ENCODE measurements at regions of chr9 and their contacts with region 1.

Region 1: DNA sequence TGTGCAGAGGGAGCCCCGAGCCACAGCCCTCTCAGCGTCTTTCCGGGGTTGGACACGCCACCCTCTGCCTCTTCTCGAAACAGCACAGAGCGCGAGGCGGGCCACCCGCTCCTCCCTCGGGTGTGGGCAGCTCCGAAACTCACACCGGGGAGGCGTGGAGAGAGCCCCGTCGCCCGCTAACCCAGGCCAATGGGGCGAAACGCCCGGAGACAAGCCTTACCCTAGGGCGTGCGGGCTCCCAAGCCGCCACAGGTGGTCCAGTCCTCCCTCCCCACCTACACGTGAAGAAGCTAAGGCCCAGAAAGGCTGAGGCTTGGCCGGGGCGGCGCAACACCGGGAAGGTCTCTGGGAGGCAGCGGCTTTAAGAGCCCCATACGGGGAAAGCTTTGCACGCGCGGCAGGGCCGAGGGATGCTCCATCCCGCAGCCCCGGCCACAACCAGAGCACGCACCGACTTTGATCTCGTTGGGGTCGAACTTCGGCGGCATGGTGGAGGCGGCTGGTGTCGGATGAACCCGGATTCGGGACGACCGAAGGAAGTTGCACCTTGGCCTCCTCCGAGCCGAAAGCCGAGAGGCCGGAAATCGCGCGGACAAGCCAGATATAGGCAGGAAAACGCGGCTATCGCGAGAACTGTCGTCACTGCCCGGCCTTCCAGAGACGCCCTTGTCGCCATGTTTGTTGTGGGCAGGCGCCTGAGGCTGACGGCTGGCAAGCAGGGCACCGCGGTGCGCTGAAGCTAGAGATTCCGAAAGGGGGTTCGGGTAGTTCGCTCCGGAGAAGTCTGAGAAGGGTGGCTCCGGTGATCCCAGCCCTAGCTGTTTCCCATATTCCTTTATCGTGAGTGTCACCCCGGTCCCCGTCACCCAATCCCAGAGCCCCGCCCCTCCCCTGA is at the starts of genes LRSAM1 and RPL12:
- DNase-seq: peak; percentile 95 to 100 (median 98)
- ATAC-seq: peak; percentile 85
- H3K4me3 ChIP-seq: peak within 1 kb of the TSS; percentile 75
- H3K4me3 Mint-ChIP-seq: peak within 1 kb of the TSS; percentile 83 to 98 (median 94)
- H3K27ac ChIP-seq: peak within 1 kb of the TSS; percentile 86
- H3K27ac Mint-ChIP-seq: peak within 1 kb of the TSS; percentile 76 to 97 (median 94)
- H3K4me1 ChIP-seq: peaks cover 21 to 25% of the 10 kb centered on the region in 2 donors
- H3K4me1 Mint-ChIP-seq: peaks cover 21 to 45% (median 40%) of the 10 kb centered on the region in 7 donors
- H3K27me3 ChIP-seq: no peaks in the 10 kb centered on the region
- H3K27me3 Mint-ChIP-seq: no peaks in the 10 kb centered on the region
- total RNA-seq, gene LRSAM1: 15.1 to 23.3 (median 19.8) TPM
- total RNA-seq, gene RPL12: 1,005 to 1,932 (median 1,675) TPM

Region 2: DNA sequence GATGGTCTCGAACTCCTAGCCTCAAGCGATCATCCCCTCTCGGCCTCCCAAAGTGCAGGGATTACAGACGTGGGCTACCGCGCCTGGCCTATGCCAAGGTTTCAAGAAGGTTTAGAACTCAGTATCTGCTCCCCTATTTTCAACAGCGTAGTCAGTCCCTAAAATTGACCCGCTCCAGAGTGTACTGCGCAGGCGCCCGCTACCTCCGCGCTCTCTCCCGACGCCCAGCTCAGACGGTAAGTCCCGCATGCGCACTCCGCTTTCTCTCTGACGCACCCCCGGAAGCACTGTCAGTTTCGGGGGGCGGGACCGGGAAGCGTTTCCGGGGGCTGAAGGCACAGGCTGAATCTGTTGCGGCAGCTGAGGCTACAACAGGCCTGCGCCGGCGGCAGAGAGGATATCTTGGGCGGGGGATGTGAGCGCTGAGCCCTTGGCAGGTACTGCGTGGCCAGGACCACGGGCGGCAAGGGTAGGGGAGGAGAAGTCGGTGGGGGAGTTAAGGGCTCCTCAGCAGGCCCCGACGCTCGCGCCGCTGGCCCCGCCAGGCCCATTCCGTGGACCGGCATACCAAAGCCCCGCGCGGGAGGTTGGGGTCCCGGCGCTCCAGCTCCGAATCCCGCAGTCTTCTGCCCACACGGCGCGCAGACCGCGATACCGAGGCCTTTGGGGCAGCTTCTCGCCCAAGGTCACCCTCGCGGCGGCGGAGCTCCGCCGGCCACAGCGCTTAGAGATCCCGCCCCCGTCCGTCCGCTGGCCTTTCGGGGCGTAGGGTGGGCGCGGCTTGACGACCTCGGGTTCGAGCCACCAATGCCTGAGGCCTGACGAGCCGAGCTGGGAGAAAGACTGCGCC is 646.2 kb before region 1 on chr9 and contains the start of gene ZBTB43:
- CTCF ChIA-PET with region 1: no interaction called
- POLR2A ChIA-PET with region 1: no interaction called
- intact Hi-C with region 1: loop called in 1 of 2 experiments (anchors 10 kb)
- DNase-seq: peak; percentile 95 to 98 (median 98)
- ATAC-seq: peak; percentile 90
- H3K4me3 ChIP-seq: peak within 1 kb of the TSS; percentile 72
- H3K4me3 Mint-ChIP-seq: peak within 1 kb of the TSS; percentile 81 to 99 (median 97)
- H3K27ac ChIP-seq: peak within 1 kb of the TSS; percentile 83
- H3K27ac Mint-ChIP-seq: peak within 1 kb of the TSS; percentile 91 to 99 (median 95)
- H3K4me1 ChIP-seq: peaks cover 10 to 17% of the 10 kb centered on the region in 2 donors
- H3K4me1 Mint-ChIP-seq: peaks cover 32 to 50% (median 41%) of the 10 kb centered on the region in 7 donors
- H3K27me3 ChIP-seq: no peaks in the 10 kb centered on the region
- H3K27me3 Mint-ChIP-seq: peaks cover 0 to 3% (median 0%) of the 10 kb centered on the region in 5 donors
- total RNA-seq, gene ZBTB43: 17.8 to 31.4 (median 28.2) TPM

Region 3: GRCh38 chr9:127224178-127224882 is 226.7 kb before region 1 on chr9:
- CTCF ChIA-PET with region 1: no interaction called
- POLR2A ChIA-PET with region 1: interaction called, 12 read pairs
- intact Hi-C with region 1: loop called (anchors 2 kb)
- DNase-seq: peak; percentile 81 to 90 (median 85)
- ATAC-seq: peak; percentile 82
- H3K4me3 ChIP-seq: peak overlapping the region; percentile 51
- H3K4me3 Mint-ChIP-seq: peak overlapping the region; percentile 74 to 93 (median 85)
- H3K27ac ChIP-seq: no peak overlapping the region
- H3K27ac Mint-ChIP-seq: peak overlapping the region; percentile 8 to 94 (median 82)
- H3K4me1 ChIP-seq: peaks cover 10 to 31% of the 10 kb centered on the region in 2 donors
- H3K4me1 Mint-ChIP-seq: peaks cover 24 to 49% (median 41%) of the 10 kb centered on the region in 7 donors
- H3K27me3 ChIP-seq: no peaks in the 10 kb centered on the region
- H3K27me3 Mint-ChIP-seq: peaks cover 0 to 58% (median 12%) of the 10 kb centered on the region in 5 donors

Region 4: GRCh38 chr9:127347831-127348779 is 103.0 kb before region 1 on chr9:
- CTCF ChIA-PET with region 1: no interaction called
- POLR2A ChIA-PET with region 1: no interaction called
- intact Hi-C with region 1: no loop called
- DNase-seq: no peak
- ATAC-seq: no peak
- H3K4me3 ChIP-seq: no peak overlapping the region
- H3K4me3 Mint-ChIP-seq: no peak overlapping the region
- H3K27ac ChIP-seq: no peak overlapping the region
- H3K27ac Mint-ChIP-seq: no peak overlapping the region
- H3K4me1 ChIP-seq: no peaks in the 10 kb centered on the region
- H3K4me1 Mint-ChIP-seq: no peaks in the 10 kb centered on the region
- H3K27me3 ChIP-seq: peaks cover 0 to 4% of the 10 kb centered on the region in 2 donors
- H3K27me3 Mint-ChIP-seq: peaks cover 17 to 36% (median 35%) of the 10 kb centered on the region in 5 donors

Region 5: GRCh38 chr9:127366594-127366993 is 84.5 kb before region 1 on chr9:
- CTCF ChIA-PET with region 1: no interaction called
- POLR2A ChIA-PET with region 1: no interaction called
- intact Hi-C with region 1: no loop called
- DNase-seq: peak in 1 of 9 donors; percentile 7
- ATAC-seq: no peak
- H3K4me3 ChIP-seq: no peak overlapping the region
- H3K4me3 Mint-ChIP-seq: no peak overlapping the region
- H3K27ac ChIP-seq: no peak overlapping the region
- H3K27ac Mint-ChIP-seq: no peak overlapping the region
- H3K4me1 ChIP-seq: no peaks in the 10 kb centered on the region
- H3K4me1 Mint-ChIP-seq: peaks cover 0 to 7% (median 0%) of the 10 kb centered on the region in 7 donors
- H3K27me3 ChIP-seq: peaks cover 0 to 16% of the 10 kb centered on the region in 2 donors
- H3K27me3 Mint-ChIP-seq: peaks cover 38 to 73% (median 63%) of the 10 kb centered on the region in 5 donors

Region 6: DNA sequence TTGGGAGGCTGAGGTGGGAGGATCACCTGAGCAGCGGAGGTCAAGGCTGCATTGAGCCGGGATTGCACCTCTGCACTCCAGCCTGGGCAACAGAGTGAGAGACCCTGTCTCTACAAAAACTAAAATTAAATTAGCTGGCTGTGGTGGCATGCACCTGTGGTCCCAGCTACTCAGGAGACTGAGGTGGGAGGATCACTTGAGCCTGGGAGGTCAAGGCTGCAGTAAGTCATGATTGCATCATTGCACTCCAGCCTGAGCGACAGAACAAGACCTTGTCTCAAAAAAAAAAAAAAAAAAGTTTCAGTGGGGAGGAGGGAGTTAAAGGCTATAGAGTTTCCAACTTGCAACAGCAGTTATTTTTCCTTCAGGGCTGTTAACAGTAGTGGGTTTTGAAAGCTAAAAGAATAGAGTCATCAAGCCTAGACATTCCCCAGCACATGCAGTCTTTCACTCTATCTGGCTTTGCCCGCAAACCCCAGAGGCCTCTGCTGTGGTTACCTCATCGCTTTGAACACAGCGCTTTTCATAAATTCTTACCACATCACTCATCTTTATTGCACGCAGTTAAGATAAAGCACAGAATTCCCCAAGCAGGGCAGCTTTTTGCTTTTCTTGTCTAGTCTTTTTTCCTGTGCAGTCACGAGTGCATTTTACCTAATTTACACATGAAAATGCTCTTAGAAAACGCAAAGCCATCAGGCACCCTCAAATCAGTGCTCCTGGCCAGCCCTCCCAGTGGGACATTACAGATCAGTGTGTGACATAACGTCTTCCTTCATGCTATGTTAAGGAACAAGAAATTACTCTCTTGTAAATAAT is 62.8 kb before region 1 on chr9:
- CTCF ChIA-PET with region 1: no interaction called
- POLR2A ChIA-PET with region 1: interaction called, 14 read pairs
- intact Hi-C with region 1: loop called (anchors 1 to 2 kb)
- DNase-seq: peak; percentile 67 to 97 (median 94)
- ATAC-seq: peak; percentile 98
- H3K4me3 ChIP-seq: no peak overlapping the region
- H3K4me3 Mint-ChIP-seq: peak overlapping the region; percentile 16 to 73 (median 55)
- H3K27ac ChIP-seq: no peak overlapping the region
- H3K27ac Mint-ChIP-seq: peak overlapping the region; percentile 19 to 94 (median 82)
- H3K4me1 ChIP-seq: peaks cover 13 to 20% of the 10 kb centered on the region in 2 donors
- H3K4me1 Mint-ChIP-seq: peaks cover 23 to 44% (median 28%) of the 10 kb centered on the region in 7 donors
- H3K27me3 ChIP-seq: peaks cover 6 to 46% of the 10 kb centered on the region in 2 donors
- H3K27me3 Mint-ChIP-seq: peaks cover 65 to 78% (median 72%) of the 10 kb centered on the region in 5 donors

Region 7: GRCh38 chr9:127489471-127490115 is 38.5 kb after region 1 on chr9:
- CTCF ChIA-PET with region 1: no interaction called
- POLR2A ChIA-PET with region 1: no interaction called
- intact Hi-C with region 1: no loop called
- DNase-seq: no peak
- ATAC-seq: no peak
- H3K4me3 ChIP-seq: no peak overlapping the region
- H3K4me3 Mint-ChIP-seq: no peak overlapping the region
- H3K27ac ChIP-seq: no peak overlapping the region
- H3K27ac Mint-ChIP-seq: peak overlapping the region in 1 of 9 donors; percentile 39
- H3K4me1 ChIP-seq: no peaks in the 10 kb centered on the region
- H3K4me1 Mint-ChIP-seq: no peaks in the 10 kb centered on the region
- H3K27me3 ChIP-seq: no peaks in the 10 kb centered on the region
- H3K27me3 Mint-ChIP-seq: no peaks in the 10 kb centered on the region

Region 8: GRCh38 chr9:127568971-127569885 is 118.2 kb after region 1 on chr9:
- CTCF ChIA-PET with region 1: no interaction called
- POLR2A ChIA-PET with region 1: no interaction called
- intact Hi-C with region 1: loop called in 1 of 2 experiments (anchors 5 kb)
- DNase-seq: peak; percentile 20 to 82 (median 60)
- ATAC-seq: peak; percentile 91
- H3K4me3 ChIP-seq: peak overlapping the region; percentile 52
- H3K4me3 Mint-ChIP-seq: peak overlapping the region; percentile 81 to 90 (median 86)
- H3K27ac ChIP-seq: peak overlapping the region; percentile 62
- H3K27ac Mint-ChIP-seq: peak overlapping the region in 8 of 9 donors; percentile 65 to 96 (median 84)
- H3K4me1 ChIP-seq: peaks cover 12 to 18% of the 10 kb centered on the region in 2 donors
- H3K4me1 Mint-ChIP-seq: peaks cover 19 to 56% (median 21%) of the 10 kb centered on the region in 7 donors
- H3K27me3 ChIP-seq: no peaks in the 10 kb centered on the region
- H3K27me3 Mint-ChIP-seq: no peaks in the 10 kb centered on the region

Region 9: DNA sequence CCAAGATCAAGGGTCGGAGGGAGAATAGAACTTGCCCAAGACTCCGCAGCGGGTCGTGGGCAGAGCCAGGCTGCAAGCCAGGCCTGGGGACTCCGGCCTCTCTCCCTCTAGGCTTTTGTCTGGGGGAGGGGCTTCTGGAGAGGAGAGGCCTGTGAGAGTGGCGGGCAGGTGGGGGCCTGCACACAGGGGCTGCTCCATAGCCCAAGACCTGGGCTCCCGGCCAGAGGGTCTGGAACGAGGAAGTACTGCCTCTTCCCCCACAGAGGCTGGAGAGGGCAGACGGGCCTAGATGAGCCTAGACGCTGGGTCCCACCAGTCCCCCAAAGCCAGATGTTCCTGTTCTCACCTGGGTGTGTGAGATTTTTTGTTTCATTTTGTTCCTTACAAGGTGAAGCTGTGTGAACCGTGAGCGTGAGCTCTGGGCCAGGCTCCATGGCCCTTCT is 453.5 kb after region 1 on chr9:
- CTCF ChIA-PET with region 1: no interaction called
- POLR2A ChIA-PET with region 1: no interaction called
- intact Hi-C with region 1: loop called in 1 of 2 experiments (anchors 5 kb)
- DNase-seq: peak in 1 of 9 donors; percentile 29
- ATAC-seq: peak; percentile 2
- H3K4me3 ChIP-seq: peak overlapping the region; percentile 72
- H3K4me3 Mint-ChIP-seq: peak overlapping the region; percentile 86 to 98 (median 94)
- H3K27ac ChIP-seq: peak overlapping the region; percentile 95
- H3K27ac Mint-ChIP-seq: peak overlapping the region; percentile 96 to 100 (median 99)
- H3K4me1 ChIP-seq: peaks cover 35 to 49% of the 10 kb centered on the region in 2 donors
- H3K4me1 Mint-ChIP-seq: peaks cover 38 to 68% (median 52%) of the 10 kb centered on the region in 7 donors
- H3K27me3 ChIP-seq: no peaks in the 10 kb centered on the region
- H3K27me3 Mint-ChIP-seq: no peaks in the 10 kb centered on the region